GM12878 (cell line): ENCODE measurements at regions of chr3 and their contacts with region 1.

Region 1: GRCh38 chr3:129824926-129825541 is 68.5 kb downstream of the TMCC1 start:
- DNase-seq: peak; percentile 20
- ATAC-seq: peak; percentile 86
- H3K4me3 ChIP-seq: no peak overlapping the region
- H3K27ac ChIP-seq: no peak overlapping the region
- H3K4me1 ChIP-seq: peaks cover 20% of the 10 kb centered on the region; the same call in 1 of the 2 replicates
- H3K27me3 ChIP-seq: no peaks in the 10 kb centered on the region
- CTCF ChIP-seq: peak; percentile 59 to 76 (median 63); a peak in 5 of 6 replicates
- EP300 ChIP-seq: no peak
- POLR2A ChIP-seq: no peak
- RAD21 ChIP-seq: peak; percentile 89

Region 2: DNA sequence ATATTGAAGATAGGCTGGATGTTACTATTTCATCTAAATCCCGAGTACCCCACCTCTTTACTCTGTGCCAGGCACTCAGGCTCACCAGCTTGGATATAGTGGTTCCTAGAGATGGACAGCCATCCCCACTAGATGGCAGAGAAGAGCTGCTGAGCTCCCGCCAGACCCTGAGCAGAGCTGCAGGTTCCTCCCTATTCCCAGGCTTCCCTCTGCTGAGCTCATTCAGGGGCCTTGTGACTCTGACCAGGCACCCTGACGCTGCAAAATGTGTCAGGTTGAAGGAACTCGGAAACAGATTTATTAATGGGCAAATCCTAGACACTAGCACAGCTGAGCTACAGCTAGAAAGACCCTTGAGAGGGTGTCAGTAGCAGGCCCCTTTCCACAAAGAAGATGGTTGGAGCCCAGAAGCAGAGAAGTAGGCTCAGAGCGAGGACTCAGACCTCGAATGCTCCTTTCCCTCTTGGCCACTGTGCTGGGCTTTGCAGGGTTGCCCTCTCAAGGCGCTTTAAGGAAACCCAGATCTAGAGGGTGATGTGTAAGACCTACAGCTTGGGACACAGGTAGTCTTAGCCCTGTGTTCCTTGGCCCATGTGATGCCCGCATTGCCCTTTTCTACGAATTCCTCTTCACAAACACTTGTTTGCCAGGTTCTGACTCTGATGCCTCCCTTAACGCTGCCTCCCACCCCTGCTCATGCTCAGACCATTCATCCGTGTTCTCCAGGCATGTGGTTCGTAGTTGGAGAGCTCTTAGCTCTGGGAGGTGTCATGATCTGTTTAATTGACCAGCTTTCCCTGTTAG is 334.6 kb before region 1 on chr3:
- CTCF ChIA-PET with region 1: interaction called, 30 read pairs
- POLR2A ChIA-PET with region 1: no interaction called
- RAD21 ChIA-PET with region 1: interaction called, 19 read pairs
- SMC1A ChIA-PET with region 1: interaction called, 18 read pairs
- in situ Hi-C with region 1: loop called (anchors 5 kb)
- intact Hi-C with region 1: loop called (anchors 1 kb)
- DNase-seq: peak; percentile 12
- ATAC-seq: peak; percentile 99
- H3K4me3 ChIP-seq: no peak overlapping the region
- H3K27ac ChIP-seq: no peak overlapping the region
- H3K4me1 ChIP-seq: peaks cover 15% of the 10 kb centered on the region
- H3K27me3 ChIP-seq: no peaks in the 10 kb centered on the region
- CTCF ChIP-seq: peak; percentile 84 to 89 (median 86)
- EP300 ChIP-seq: no peak
- POLR2A ChIP-seq: no peak
- RAD21 ChIP-seq: peak; percentile 83

Region 3: GRCh38 chr3:129650256-129650872 is 174.7 kb before region 1 on chr3:
- CTCF ChIA-PET with region 1: interaction called, 151 read pairs
- POLR2A ChIA-PET with region 1: interaction called, 7 read pairs
- RAD21 ChIA-PET with region 1: interaction called, 18 read pairs
- SMC1A ChIA-PET with region 1: interaction called, 83 read pairs
- in situ Hi-C with region 1: loop called (anchors 5 kb)
- intact Hi-C with region 1: loop called (anchors 1 kb)
- DNase-seq: no peak
- ATAC-seq: peak; percentile 85
- H3K4me3 ChIP-seq: no peak overlapping the region
- H3K27ac ChIP-seq: no peak overlapping the region
- H3K4me1 ChIP-seq: no peaks in the 10 kb centered on the region
- H3K27me3 ChIP-seq: no peaks in the 10 kb centered on the region
- CTCF ChIP-seq: peak; percentile 63 to 82 (median 69); a peak in 5 of 6 replicates
- EP300 ChIP-seq: no peak
- POLR2A ChIP-seq: no peak
- RAD21 ChIP-seq: peak; percentile 89

Region 4: GRCh38 chr3:129663026-129663446 is 162.0 kb before region 1 on chr3:
- CTCF ChIA-PET with region 1: interaction called, 19 read pairs
- POLR2A ChIA-PET with region 1: no interaction called
- RAD21 ChIA-PET with region 1: interaction called, 6 read pairs
- SMC1A ChIA-PET with region 1: interaction called, 12 read pairs
- in situ Hi-C with region 1: no loop called
- intact Hi-C with region 1: no loop called
- DNase-seq: no peak
- ATAC-seq: no peak
- H3K4me3 ChIP-seq: no peak overlapping the region
- H3K27ac ChIP-seq: no peak overlapping the region
- H3K4me1 ChIP-seq: peaks cover 3% of the 10 kb centered on the region; the same call in 1 of the 2 replicates
- H3K27me3 ChIP-seq: no peaks in the 10 kb centered on the region
- CTCF ChIP-seq: no peak
- EP300 ChIP-seq: no peak
- POLR2A ChIP-seq: no peak
- RAD21 ChIP-seq: no peak

Region 5: GRCh38 chr3:129837065-129837642 is 12.1 kb after region 1 on chr3:
- CTCF ChIA-PET with region 1: interaction called, 10 read pairs
- POLR2A ChIA-PET with region 1: no interaction called
- RAD21 ChIA-PET with region 1: no interaction called
- SMC1A ChIA-PET with region 1: interaction called, 6 read pairs
- in situ Hi-C with region 1: no loop called
- intact Hi-C with region 1: no loop called
- DNase-seq: no peak
- ATAC-seq: no peak
- H3K4me3 ChIP-seq: no peak overlapping the region
- H3K27ac ChIP-seq: no peak overlapping the region
- H3K4me1 ChIP-seq: no peaks in the 10 kb centered on the region
- H3K27me3 ChIP-seq: no peaks in the 10 kb centered on the region
- CTCF ChIP-seq: no peak
- EP300 ChIP-seq: no peak
- POLR2A ChIP-seq: no peak
- RAD21 ChIP-seq: no peak

Region 6: GRCh38 chr3:129934234-129935123 is 109.4 kb after region 1 on chr3:
- CTCF ChIA-PET with region 1: interaction called, 9 read pairs
- POLR2A ChIA-PET with region 1: no interaction called
- RAD21 ChIA-PET with region 1: interaction called, 5 read pairs
- SMC1A ChIA-PET with region 1: no interaction called
- in situ Hi-C with region 1: no loop called
- intact Hi-C with region 1: loop called (anchors 2 kb)
- DNase-seq: no peak
- ATAC-seq: peak; percentile 63
- H3K4me3 ChIP-seq: no peak overlapping the region
- H3K27ac ChIP-seq: no peak overlapping the region
- H3K4me1 ChIP-seq: no peaks in the 10 kb centered on the region
- H3K27me3 ChIP-seq: no peaks in the 10 kb centered on the region
- CTCF ChIP-seq: peak; percentile 82 to 86 (median 85)
- EP300 ChIP-seq: no peak
- POLR2A ChIP-seq: no peak
- RAD21 ChIP-seq: peak; percentile 92

Region 7: GRCh38 chr3:130258532-130258952 is 433.5 kb after region 1 on chr3:
- CTCF ChIA-PET with region 1: no interaction called
- POLR2A ChIA-PET with region 1: no interaction called
- RAD21 ChIA-PET with region 1: no interaction called
- SMC1A ChIA-PET with region 1: no interaction called
- in situ Hi-C with region 1: no loop called
- intact Hi-C with region 1: no loop called
- DNase-seq: no peak
- ATAC-seq: no peak
- H3K4me3 ChIP-seq: no peak overlapping the region
- H3K27ac ChIP-seq: no peak overlapping the region
- H3K4me1 ChIP-seq: no peaks in the 10 kb centered on the region
- H3K27me3 ChIP-seq: no peaks in the 10 kb centered on the region; a peak in 1 of 4 replicates
- CTCF ChIP-seq: no peak
- EP300 ChIP-seq: no peak
- POLR2A ChIP-seq: no peak
- RAD21 ChIP-seq: no peak